Vagina (tissue), 2 donors: ENCODE measurements at regions of chr7 and their contacts with region 1.

Region 1: GRCh38 chr7:155205368-155206317 is 92.0 kb upstream of the INSIG1 start:
- DNase-seq: peak in 1 of 2 donors; percentile 96
- H3K4me3 ChIP-seq: peak overlapping the region; percentile 45 to 49
- H3K27ac ChIP-seq: peak overlapping the region; percentile 87
- H3K4me1 ChIP-seq: peaks cover 5% of the 10 kb centered on the region
- H3K27me3 ChIP-seq: no peaks in the 10 kb centered on the region
- CTCF ChIP-seq: no peak
- POLR2A ChIP-seq: peak in 1 of 2 donors; percentile 1

Region 2: DNA sequence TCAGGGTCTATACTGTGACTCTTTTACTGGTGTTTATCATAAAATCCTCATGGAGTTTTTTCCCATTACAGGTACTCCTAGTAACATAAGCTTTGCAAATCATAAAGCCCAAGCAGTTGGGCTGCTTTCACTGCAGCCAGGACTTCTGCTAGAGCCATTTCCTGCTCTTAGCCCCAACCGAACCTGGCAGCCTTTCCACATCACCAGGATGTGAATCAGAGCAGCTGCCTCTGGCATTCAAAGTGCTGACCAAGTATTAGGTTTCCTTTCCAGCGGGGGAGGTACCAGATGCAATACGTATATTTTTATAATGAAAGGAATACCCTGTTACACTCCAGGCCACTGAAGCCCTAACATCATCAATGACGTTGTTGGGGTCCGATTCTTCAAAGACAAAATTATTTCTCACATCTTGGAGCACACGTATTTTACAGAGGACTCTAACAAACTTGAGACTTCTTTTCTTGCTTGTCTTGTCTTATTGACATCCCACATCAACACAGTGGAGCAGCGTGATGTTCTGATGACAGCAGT is 139.2 kb before region 1 on chr7:
- intact Hi-C with region 1: no loop called
- DNase-seq: no peak
- H3K4me3 ChIP-seq: no peak overlapping the region
- H3K27ac ChIP-seq: no peak overlapping the region
- H3K4me1 ChIP-seq: no peaks in the 10 kb centered on the region
- H3K27me3 ChIP-seq: no peaks in the 10 kb centered on the region
- CTCF ChIP-seq: no peak
- POLR2A ChIP-seq: no peak

Region 3: GRCh38 chr7:155298834-155299534 is 93.3 kb after region 1 on chr7:
- intact Hi-C with region 1: loop called (anchors 10 kb)
- DNase-seq: peak in 1 of 2 donors; percentile 98
- H3K4me3 ChIP-seq: peak overlapping the region; percentile 67 to 96
- H3K27ac ChIP-seq: peak overlapping the region; percentile 95
- H3K4me1 ChIP-seq: peaks cover 42% of the 10 kb centered on the region
- H3K27me3 ChIP-seq: no peaks in the 10 kb centered on the region
- CTCF ChIP-seq: no peak
- POLR2A ChIP-seq: peak in 1 of 2 donors; percentile 22